Upper lobe of right lung (tissue), 1 donor: ENCODE measurements at regions of chr7 and their contacts with region 1.

Region 1: GRCh38 chr7:31735991-31736982 is 49.3 kb downstream of the PPP1R17 start:
- DNase-seq: no peak
- ATAC-seq: peak; percentile 93
- H3K4me3 ChIP-seq: no peak overlapping the region
- H3K27ac ChIP-seq: no peak overlapping the region
- H3K4me1 ChIP-seq: no peaks in the 10 kb centered on the region
- H3K27me3 ChIP-seq: no peaks in the 10 kb centered on the region
- CTCF ChIP-seq: peak; percentile 87

Region 2: GRCh38 chr7:31202801-31203200 is 533.5 kb before region 1 on chr7:
- intact Hi-C with region 1: no loop called
- DNase-seq: no peak
- ATAC-seq: no peak
- H3K4me3 ChIP-seq: no peak overlapping the region
- H3K27ac ChIP-seq: no peak overlapping the region
- H3K4me1 ChIP-seq: no peaks in the 10 kb centered on the region
- H3K27me3 ChIP-seq: no peaks in the 10 kb centered on the region
- CTCF ChIP-seq: no peak

Region 3: GRCh38 chr7:31443457-31443856 is 292.8 kb before region 1 on chr7:
- intact Hi-C with region 1: loop called (anchors 10 kb)
- DNase-seq: no peak
- ATAC-seq: peak; percentile 90
- H3K4me3 ChIP-seq: no peak overlapping the region
- H3K27ac ChIP-seq: no peak overlapping the region
- H3K4me1 ChIP-seq: no peaks in the 10 kb centered on the region
- H3K27me3 ChIP-seq: no peaks in the 10 kb centered on the region
- CTCF ChIP-seq: peak; percentile 79

Region 4: GRCh38 chr7:31938653-31939052 is 202.4 kb after region 1 on chr7:
- intact Hi-C with region 1: no loop called
- DNase-seq: no peak
- ATAC-seq: no peak
- H3K4me3 ChIP-seq: no peak overlapping the region
- H3K27ac ChIP-seq: no peak overlapping the region
- H3K4me1 ChIP-seq: no peaks in the 10 kb centered on the region
- H3K27me3 ChIP-seq: no peaks in the 10 kb centered on the region
- CTCF ChIP-seq: no peak